Posterior vena cava (tissue), 2 donors: ENCODE measurements at regions of chr1 and their contacts with region 1.

Region 1: GRCh38 chr1:197384471-197384870 is 116.4 kb downstream of the CRB1 start:
- DNase-seq: no peak

Region 2: DNA sequence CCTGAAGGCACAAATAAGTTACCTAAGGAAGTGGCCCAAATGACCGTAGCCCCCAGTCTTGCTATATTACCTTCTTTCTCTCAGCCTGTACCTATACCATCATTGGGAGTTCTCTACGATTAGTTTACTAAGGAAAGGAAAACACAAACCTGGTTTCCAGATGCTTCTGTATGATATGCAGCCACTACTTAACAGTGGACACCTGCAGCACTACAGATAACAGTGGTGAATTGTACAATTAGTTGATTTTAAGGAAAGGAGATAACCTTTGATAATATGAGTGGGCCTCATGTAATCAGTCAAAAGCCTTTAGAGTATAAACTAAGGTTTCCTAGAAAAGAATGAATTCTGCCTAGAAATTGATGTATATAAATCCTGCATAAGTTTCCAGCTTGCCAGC is 1933.7 kb before region 1 on chr1:
- intact Hi-C with region 1: no loop called
- DNase-seq: no peak

Region 3: GRCh38 chr1:197423006-197423405 is 38.5 kb after region 1 on chr1:
- intact Hi-C with region 1: no loop called
- DNase-seq: no peak

Region 4: DNA sequence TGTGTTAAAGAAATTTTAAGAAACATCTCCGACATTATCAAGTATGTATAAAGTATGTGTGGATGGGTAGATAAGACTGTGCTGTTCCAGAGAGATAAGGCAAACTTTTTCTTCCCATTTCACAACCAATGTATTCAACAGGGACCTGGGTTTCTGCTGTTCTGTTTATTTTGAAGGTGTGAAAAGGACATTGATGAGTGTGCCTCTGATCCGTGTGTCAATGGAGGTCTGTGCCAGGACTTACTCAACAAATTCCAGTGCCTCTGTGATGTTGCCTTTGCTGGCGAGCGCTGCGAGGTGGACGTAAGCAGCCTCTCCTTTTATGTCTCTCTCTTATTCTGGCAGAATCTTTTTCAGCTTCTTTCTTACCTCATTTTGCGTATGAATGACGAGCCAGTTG is 57.5 kb after region 1 on chr1:
- intact Hi-C with region 1: loop called in 1 of 2 experiments (anchors 2 kb)
- DNase-seq: no peak